Activated CD4-positive, alpha-beta memory T cell treated with anti-CD3 and anti-CD28 coated beads, Interleukin-2, amount 10 ng/mL, durations not matched to agents 7 days and 5 days (primary cell): ENCODE measurements at regions of chr16 and their contacts with region 1.

Region 1: GRCh38 chr16:27179500-27180072 is 23.7 kb upstream of the KDM8 start:
- DNase-seq: peak; percentile 92
- H3K4me3 Mint-ChIP-seq: no peak overlapping the region
- H3K27ac Mint-ChIP-seq: no peak overlapping the region
- H3K4me1 Mint-ChIP-seq: peaks cover 36% of the 10 kb centered on the region
- H3K27me3 Mint-ChIP-seq: peaks cover 6% of the 10 kb centered on the region

Region 2: GRCh38 chr16:27118526-27118925 is 61.1 kb before region 1 on chr16:
- CTCF ChIA-PET with region 1: no interaction called
- POLR2A ChIA-PET with region 1: no interaction called
- DNase-seq: no peak
- H3K4me3 Mint-ChIP-seq: no peak overlapping the region
- H3K27ac Mint-ChIP-seq: no peak overlapping the region
- H3K4me1 Mint-ChIP-seq: no peaks in the 10 kb centered on the region
- H3K27me3 Mint-ChIP-seq: peaks cover 15% of the 10 kb centered on the region

Region 3: DNA sequence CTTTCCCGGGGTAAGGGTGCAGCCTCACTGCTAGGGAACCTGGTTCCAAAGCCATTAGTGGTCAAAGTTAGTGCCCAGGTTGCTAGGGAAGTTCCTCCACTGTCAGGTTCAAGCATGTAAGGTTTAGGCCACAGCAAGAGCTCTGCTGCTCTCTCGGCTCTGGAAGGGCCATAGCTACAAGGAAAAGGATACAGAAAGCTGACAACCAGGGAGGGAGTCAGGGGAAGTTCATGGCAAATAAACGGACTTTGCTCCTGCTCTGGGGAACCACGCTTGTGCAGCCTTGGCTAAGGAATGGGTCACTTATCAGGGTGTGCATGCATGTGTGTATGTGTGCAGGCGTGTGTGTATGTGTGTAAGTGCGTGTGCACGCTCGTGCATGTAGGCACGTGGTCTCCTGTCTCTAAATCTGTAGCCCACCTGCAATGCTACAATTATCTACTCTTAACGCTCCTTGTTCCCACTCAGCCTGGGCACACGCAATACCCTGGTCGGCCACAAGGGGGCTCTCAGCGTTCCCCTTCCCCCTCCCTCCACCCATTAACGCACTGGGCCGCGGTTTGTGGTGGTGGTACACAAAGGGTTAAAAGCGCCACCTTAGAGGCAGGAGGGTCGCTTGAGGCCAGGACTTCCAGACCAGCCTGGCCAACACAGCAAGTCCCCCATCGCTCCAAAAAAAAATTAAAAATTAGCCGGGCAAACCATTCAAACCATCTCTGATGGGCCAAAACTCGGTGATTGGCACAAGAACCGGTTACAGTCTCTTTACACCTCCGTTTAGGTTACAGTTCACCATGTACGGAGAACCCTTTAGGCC is 24.7 kb before region 1 on chr16:
- CTCF ChIA-PET with region 1: interaction called, 25 read pairs
- POLR2A ChIA-PET with region 1: no interaction called
- DNase-seq: peak; percentile 69
- H3K4me3 Mint-ChIP-seq: no peak overlapping the region
- H3K27ac Mint-ChIP-seq: no peak overlapping the region
- H3K4me1 Mint-ChIP-seq: peaks cover 9% of the 10 kb centered on the region
- H3K27me3 Mint-ChIP-seq: no peaks in the 10 kb centered on the region

Region 4: GRCh38 chr16:27203429-27204231 is 24.0 kb after region 1 on chr16 and contains the start of gene KDM8:
- CTCF ChIA-PET with region 1: interaction called, 99 read pairs
- POLR2A ChIA-PET with region 1: interaction called, 16 read pairs
- DNase-seq: peak; percentile 100
- H3K4me3 Mint-ChIP-seq: peak within 1 kb of the TSS; percentile 95
- H3K27ac Mint-ChIP-seq: peak within 1 kb of the TSS; percentile 99
- H3K4me1 Mint-ChIP-seq: peaks cover 56% of the 10 kb centered on the region
- H3K27me3 Mint-ChIP-seq: no peaks in the 10 kb centered on the region
- total RNA-seq, gene KDM8: 12.7 to 14.3 TPM

Region 5: GRCh38 chr16:27208796-27209195 is 29.2 kb after region 1 on chr16:
- CTCF ChIA-PET with region 1: interaction called, 43 read pairs
- POLR2A ChIA-PET with region 1: interaction called, 16 read pairs
- DNase-seq: no peak
- H3K4me3 Mint-ChIP-seq: no peak overlapping the region
- H3K27ac Mint-ChIP-seq: no peak overlapping the region
- H3K4me1 Mint-ChIP-seq: peaks cover 10% of the 10 kb centered on the region
- H3K27me3 Mint-ChIP-seq: no peaks in the 10 kb centered on the region

Region 6: DNA sequence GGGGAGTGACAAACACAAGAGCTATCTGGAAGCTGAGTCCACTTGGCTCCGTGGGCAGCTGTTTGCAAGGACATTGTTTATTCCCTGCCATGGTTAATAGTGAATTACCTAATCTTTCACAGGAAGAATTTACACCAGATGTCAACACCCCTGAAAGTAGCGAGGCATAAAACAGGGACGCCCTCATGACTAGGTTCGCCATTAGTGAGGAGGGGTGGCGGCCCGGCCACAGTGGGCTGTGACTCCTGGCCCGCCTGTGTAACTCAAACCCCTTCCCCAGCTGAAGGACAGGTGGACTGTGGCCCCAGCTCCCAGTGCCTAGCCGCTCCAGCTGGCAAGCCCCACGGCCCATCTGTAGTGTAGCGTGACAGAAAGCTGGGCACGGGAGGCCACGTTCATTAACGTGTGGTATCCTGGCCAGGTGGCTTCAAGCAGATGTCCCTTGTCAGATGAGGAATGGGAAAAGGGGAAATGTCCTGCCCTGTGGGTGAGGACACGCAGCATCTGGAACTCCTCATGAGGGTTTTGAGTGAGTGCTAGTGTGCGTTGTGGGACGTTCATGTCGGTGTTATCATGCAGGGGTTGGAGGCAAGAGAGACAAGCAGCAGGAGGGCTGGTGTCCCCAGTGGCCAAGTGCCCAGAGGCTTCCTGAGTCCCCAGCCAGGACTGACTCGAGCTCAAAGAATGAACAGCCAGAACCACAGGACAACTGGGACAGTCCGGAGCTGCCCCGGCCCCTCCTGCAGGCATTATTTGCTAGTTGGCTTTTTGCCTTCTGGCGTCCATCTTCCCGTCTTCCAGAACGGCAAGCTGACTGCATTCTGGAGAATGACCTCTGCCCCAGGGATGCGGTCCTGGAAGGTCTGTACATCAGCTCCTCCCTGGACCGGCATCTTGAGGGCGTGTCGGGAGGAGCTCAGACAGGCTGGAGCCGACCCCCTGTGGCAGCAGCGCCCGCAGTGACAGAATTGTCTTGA is 43.0 kb after region 1 on chr16:
- CTCF ChIA-PET with region 1: interaction called, 14 read pairs
- POLR2A ChIA-PET with region 1: interaction called, 6 read pairs
- DNase-seq: no peak
- H3K4me3 Mint-ChIP-seq: no peak overlapping the region
- H3K27ac Mint-ChIP-seq: no peak overlapping the region
- H3K4me1 Mint-ChIP-seq: peaks cover 21% of the 10 kb centered on the region
- H3K27me3 Mint-ChIP-seq: no peaks in the 10 kb centered on the region

Region 7: GRCh38 chr16:27318392-27319226 is 139.0 kb after region 1 on chr16:
- CTCF ChIA-PET with region 1: interaction called, 22 read pairs
- POLR2A ChIA-PET with region 1: interaction called, 21 read pairs
- DNase-seq: peak; percentile 72
- H3K4me3 Mint-ChIP-seq: peak overlapping the region; percentile 97
- H3K27ac Mint-ChIP-seq: peak overlapping the region; percentile 98
- H3K4me1 Mint-ChIP-seq: peaks cover 75% of the 10 kb centered on the region
- H3K27me3 Mint-ChIP-seq: no peaks in the 10 kb centered on the region

Region 8: GRCh38 chr16:27355610-27356009 is 176.0 kb after region 1 on chr16:
- CTCF ChIA-PET with region 1: interaction called, 12 read pairs
- POLR2A ChIA-PET with region 1: interaction called, 4 read pairs
- DNase-seq: peak; percentile 49
- H3K4me3 Mint-ChIP-seq: no peak overlapping the region
- H3K27ac Mint-ChIP-seq: no peak overlapping the region
- H3K4me1 Mint-ChIP-seq: peaks cover 13% of the 10 kb centered on the region
- H3K27me3 Mint-ChIP-seq: no peaks in the 10 kb centered on the region